ENCODE measurements at regions of chr20 and their contacts with region 1.

Region 1: DNA sequence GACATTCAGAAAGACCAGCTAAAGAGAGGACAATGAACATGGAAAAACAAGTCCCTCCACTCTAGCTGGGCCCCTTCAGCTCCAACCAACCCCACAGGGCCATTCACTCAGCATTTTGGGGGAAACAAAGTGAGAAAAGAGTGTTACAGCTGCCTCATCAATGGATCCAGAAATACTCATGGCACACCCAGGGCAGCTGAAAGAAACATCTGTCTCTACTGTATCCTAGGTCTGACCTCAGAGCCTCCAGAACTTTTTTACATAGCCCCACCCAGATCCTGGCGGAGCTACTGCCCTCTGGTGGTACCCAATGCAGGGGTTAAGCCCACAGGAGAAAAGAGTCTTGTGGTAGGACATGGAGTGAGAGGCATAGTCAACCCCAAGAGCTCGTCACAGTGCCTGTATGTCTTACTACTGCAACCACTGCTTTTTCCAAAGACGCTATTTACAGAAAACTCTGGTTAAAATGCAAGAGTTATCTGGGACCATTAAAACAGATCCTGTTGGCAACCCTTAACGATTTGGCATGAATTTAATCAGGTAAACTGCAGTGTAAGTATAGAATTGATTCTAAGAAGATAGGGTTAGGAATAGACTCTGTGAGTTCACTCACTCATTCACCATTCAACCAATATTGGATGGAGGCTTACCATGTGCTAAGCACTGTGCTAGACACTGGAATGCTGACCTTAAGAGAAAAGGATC is 37.4 kb upstream of the FAM83C start:
- H3K4me3 ChIP-seq: no peak overlapping the region
- H3K27ac ChIP-seq: no peak overlapping the region
- H3K4me1 ChIP-seq: no peaks in the 10 kb centered on the region; the same call in 1 of the 2 replicates
- CTCF ChIP-seq: peak; percentile 53

Region 2: GRCh38 chr20:35303735-35304491 is 25.7 kb before region 1 on chr20:
- CTCF ChIA-PET with region 1: interaction called, 236 read pairs
- POLR2A ChIA-PET with region 1: no interaction called
- H3K4me3 ChIP-seq: no peak overlapping the region
- H3K27ac ChIP-seq: no peak overlapping the region
- H3K4me1 ChIP-seq: no peaks in the 10 kb centered on the region; the same call in 1 of the 2 replicates
- CTCF ChIP-seq: peak; percentile 86

Region 3: DNA sequence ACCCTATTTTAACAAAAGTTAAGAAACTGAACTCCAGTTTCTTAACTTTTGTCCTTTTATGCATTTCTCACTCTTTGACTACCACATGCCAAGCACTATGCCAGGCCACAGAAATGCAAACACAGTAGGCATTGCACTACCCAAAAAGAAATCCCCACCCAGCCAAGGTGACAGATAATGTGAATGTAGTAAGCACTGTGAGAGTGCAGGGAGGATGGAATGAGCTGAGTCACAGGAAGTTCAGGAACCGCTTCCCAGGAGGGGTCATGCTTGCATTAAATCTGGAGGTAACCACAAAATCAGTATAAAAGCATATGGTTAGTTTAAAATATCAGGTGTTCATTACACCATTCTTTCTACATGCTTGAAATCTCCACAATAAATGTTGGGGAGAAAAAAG is 17.2 kb before region 1 on chr20:
- CTCF ChIA-PET with region 1: interaction called, 236 read pairs
- POLR2A ChIA-PET with region 1: no interaction called
- H3K4me3 ChIP-seq: no peak overlapping the region
- H3K27ac ChIP-seq: no peak overlapping the region
- H3K4me1 ChIP-seq: peaks cover 12% of the 10 kb centered on the region
- CTCF ChIP-seq: no peak

Region 4: GRCh38 chr20:35318502-35319157 is 11.0 kb before region 1 on chr20:
- CTCF ChIA-PET with region 1: interaction called, 22 read pairs
- POLR2A ChIA-PET with region 1: no interaction called
- H3K4me3 ChIP-seq: peak overlapping the region; percentile 15
- H3K27ac ChIP-seq: peak overlapping the region; percentile 65
- H3K4me1 ChIP-seq: peaks cover 34% of the 10 kb centered on the region
- CTCF ChIP-seq: no peak

Region 5: DNA sequence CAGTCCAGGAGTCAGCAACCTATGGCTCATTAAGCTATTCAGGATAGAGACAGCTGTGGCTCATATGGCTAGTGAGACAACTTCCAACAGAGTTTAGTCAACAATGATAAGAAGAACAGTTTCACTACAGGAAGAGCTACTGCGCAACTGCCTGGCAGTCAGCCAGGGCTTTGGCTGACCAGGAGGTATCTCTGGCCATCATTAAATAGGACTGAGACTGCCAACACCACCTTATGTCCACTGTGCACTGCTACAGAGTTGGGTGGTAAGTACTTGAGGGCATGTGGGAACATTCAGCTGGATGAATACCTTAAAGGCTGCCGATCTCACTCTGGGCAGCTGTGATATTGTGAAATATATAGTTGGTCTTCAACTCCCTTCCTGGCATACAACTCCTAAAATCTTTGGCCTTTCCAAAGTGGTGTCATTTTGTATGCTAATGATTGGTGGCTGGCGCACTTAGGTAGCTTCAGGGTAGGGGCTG is 14.8 kb after region 1 on chr20:
- CTCF ChIA-PET with region 1: interaction called, 15 read pairs
- POLR2A ChIA-PET with region 1: no interaction called
- H3K4me3 ChIP-seq: no peak overlapping the region
- H3K27ac ChIP-seq: no peak overlapping the region
- H3K4me1 ChIP-seq: peaks cover 4% of the 10 kb centered on the region; the same call in 1 of the 2 replicates
- CTCF ChIP-seq: no peak

Region 6: GRCh38 chr20:35387334-35387733 is 57.7 kb after region 1 on chr20:
- CTCF ChIA-PET with region 1: no interaction called
- POLR2A ChIA-PET with region 1: no interaction called
- H3K4me3 ChIP-seq: no peak overlapping the region
- H3K27ac ChIP-seq: no peak overlapping the region
- H3K4me1 ChIP-seq: peaks cover 3% of the 10 kb centered on the region; the same call in 1 of the 2 replicates
- CTCF ChIP-seq: no peak

Region 7: DNA sequence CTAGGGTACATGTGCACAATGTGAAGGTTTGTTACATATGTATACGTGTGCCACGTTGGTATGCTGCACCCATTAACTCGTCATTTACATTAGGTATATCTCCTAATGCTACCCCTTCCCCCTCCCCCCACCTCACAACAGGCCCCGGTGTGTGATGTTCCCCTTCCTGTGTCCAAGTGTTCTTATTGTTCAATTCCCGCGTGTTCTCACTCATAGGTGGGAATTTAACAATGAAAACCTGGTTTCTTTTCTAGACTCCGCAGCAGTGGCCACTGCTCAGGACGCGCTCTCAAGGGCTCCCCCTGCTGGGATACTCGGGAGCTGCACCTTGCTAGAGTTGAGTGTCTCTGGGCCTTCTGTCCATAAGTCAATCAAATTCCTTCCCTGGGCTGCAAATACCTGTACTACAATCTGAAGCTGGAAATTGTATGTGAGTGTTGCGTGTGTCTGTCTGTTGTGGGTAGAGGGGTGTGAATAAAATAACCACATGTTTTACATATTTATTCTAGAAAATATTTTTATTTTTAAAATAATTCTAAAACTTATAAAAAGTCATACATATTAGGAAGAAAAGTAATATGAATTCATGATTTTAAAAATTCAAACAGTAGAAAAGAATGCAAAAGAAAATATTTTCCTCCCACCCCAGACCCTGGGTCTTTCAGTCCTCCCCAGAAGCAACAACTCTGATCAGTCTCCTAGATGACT is 117.6 kb after region 1 on chr20:
- CTCF ChIA-PET with region 1: interaction called, 25 read pairs
- POLR2A ChIA-PET with region 1: no interaction called
- H3K4me3 ChIP-seq: no peak overlapping the region
- H3K27ac ChIP-seq: no peak overlapping the region
- H3K4me1 ChIP-seq: no peaks in the 10 kb centered on the region
- CTCF ChIP-seq: peak; percentile 72